AG04449 (cell line): ENCODE measurements at regions of chr3 and their contacts with region 1.

Region 1: GRCh38 chr3:120558771-120559241 is 37.3 kb upstream of the NDUFB4 start:
- DNase-seq: peak; percentile 38
- H3K4me3 ChIP-seq: peak overlapping the region; percentile 55
- CTCF ChIP-seq: peak; percentile 88

Region 2: GRCh38 chr3:120404876-120405275 is 153.9 kb before region 1 on chr3:
- CTCF ChIA-PET with region 1: interaction called, 42 read pairs
- POLR2A ChIA-PET with region 1: no interaction called
- DNase-seq: no peak
- H3K4me3 ChIP-seq: no peak overlapping the region
- CTCF ChIP-seq: no peak

Region 3: DNA sequence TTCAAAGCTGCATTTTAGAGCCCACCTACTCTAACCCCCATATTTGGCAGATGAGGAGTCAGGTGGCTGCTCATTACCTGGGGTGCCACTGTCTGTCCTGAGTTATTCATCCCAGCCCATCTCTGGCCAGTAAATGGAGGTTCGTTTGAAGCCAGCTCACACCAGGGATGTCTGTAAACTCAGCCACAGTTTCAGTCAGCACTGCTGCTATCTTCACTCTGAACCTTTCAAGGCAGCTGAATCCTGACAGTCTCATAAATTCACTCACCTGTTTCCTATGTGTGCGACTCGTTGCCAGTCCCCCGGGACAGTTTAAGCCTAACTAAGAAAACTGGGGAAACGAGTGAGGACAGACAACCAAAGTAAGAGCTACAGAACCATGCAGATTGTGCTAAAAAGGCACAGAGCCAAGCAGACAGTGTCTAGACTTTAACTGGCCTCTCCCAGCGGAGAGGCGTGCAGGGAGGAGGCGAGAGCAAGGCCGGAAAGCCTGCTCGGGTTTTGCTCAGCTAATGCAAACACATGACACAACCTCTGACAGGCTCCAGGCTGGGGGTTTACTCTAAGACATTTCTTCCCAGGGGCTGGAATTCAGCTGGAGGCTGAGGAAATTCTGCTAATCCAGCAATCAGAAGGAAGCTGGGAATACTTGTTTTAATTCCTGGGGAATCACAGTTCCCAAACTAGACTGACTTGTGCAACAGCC is 120.0 kb before region 1 on chr3:
- CTCF ChIA-PET with region 1: interaction called, 108 read pairs
- POLR2A ChIA-PET with region 1: interaction called, 6 read pairs
- DNase-seq: no peak
- H3K4me3 ChIP-seq: no peak overlapping the region
- CTCF ChIP-seq: no peak

Region 4: DNA sequence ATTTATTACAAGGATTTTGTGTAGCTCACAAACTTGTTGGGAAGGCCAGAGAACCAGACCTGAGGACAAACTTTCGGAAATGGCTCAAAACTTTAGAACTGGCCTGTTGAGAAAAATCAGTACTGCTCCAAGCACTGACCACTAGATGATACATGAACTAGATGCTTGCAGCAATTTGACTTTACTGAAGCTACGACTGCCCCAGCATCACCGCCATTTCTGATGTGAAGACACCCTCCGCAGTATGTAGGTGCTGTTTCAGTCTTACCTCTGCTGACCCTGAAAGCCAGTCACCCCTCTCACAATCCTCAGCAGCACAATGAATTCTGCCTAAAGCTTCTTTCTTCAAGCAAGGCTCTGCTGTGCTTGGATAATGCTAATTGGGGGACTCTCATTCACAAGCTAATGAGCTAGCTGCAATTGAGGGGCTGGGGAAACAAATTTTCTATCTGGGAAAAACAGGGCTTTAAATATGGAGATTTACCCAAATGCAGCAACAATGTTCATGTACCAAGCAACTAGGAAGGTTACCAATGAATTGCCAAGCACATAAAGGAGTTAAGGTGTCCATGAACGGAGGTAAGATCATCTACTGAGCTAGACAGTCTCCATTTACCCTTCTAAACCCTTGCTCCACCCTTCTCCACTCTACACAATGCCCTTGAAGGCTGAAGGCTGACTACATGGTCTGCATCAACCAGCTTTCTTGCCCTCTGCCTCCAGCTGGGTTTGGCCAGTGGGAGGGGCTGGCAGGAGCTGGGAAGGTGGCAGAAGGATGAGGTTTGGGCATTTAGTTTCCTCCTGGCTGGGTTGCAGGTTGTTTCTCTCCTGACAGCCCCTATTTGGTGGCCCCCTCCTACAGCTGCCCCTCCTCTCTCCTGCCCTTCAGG is 54.8 kb before region 1 on chr3:
- CTCF ChIA-PET with region 1: interaction called, 10 read pairs
- POLR2A ChIA-PET with region 1: no interaction called
- DNase-seq: no peak
- H3K4me3 ChIP-seq: no peak overlapping the region
- CTCF ChIP-seq: no peak

Region 5: GRCh38 chr3:120801484-120801883 is 242.7 kb after region 1 on chr3:
- CTCF ChIA-PET with region 1: interaction called, 31 read pairs
- POLR2A ChIA-PET with region 1: no interaction called
- DNase-seq: no peak
- H3K4me3 ChIP-seq: no peak overlapping the region
- CTCF ChIP-seq: no peak